ENCODE measurements at regions of chr1 and their contacts with region 1.

Region 1: GRCh38 chr1:115976062-115976920 is at the start of gene SLC22A15:
- DNase-seq: peak; percentile 37
- H3K4me3 ChIP-seq: peak within 1 kb of the TSS; percentile 65 to 82 (median 75)
- H3K27ac ChIP-seq: peak within 1 kb of the TSS; percentile 91 to 97 (median 94)
- H3K4me1 ChIP-seq: peaks cover 0 to 41% (median 9%) of the 10 kb centered on the region in 3 donors
- H3K27me3 ChIP-seq: no peaks in the 10 kb centered on the region
- CTCF ChIP-seq: no peak
- POLR2A ChIP-seq: peak in 2 of 4 donors; percentile 21 to 43
- total RNA-seq, gene SLC22A15: 7.2 to 12.0 (median 9.4) TPM

Region 2: GRCh38 chr1:115807723-115808122 is 168.6 kb before region 1 on chr1:
- intact Hi-C with region 1: loop called (anchors 5 kb)
- DNase-seq: no peak
- H3K4me3 ChIP-seq: no peak overlapping the region
- H3K27ac ChIP-seq: no peak overlapping the region
- H3K4me1 ChIP-seq: peaks cover 0 to 26% (median 4%) of the 10 kb centered on the region in 3 donors
- H3K27me3 ChIP-seq: no peaks in the 10 kb centered on the region
- CTCF ChIP-seq: peak; percentile 35 to 80 (median 76)
- POLR2A ChIP-seq: no peak

Region 3: GRCh38 chr1:115839029-115839678 is 137.1 kb before region 1 on chr1:
- intact Hi-C with region 1: no loop called
- DNase-seq: no peak
- H3K4me3 ChIP-seq: peak overlapping the region; percentile 48 to 59 (median 58)
- H3K27ac ChIP-seq: peak overlapping the region; percentile 66 to 90 (median 87)
- H3K4me1 ChIP-seq: peaks cover 16 to 43% (median 19%) of the 10 kb centered on the region in 3 donors
- H3K27me3 ChIP-seq: peaks cover 0 to 82% (median 7%) of the 10 kb centered on the region in 4 donors
- CTCF ChIP-seq: no peak
- POLR2A ChIP-seq: peak in 2 of 4 donors; percentile 13 to 57

Measured in esophagus squamous epithelium (tissue), 5 donors.